BJ (cell line): ENCODE measurements at regions of chr15 and their contacts with region 1.

Region 1: GRCh38 chr15:71431345-71432336 is 316.4 kb downstream of the THSD4 start:
- DNase-seq: no peak
- H3K4me3 ChIP-seq: no peak overlapping the region
- H3K27me3 ChIP-seq: no peaks in the 10 kb centered on the region; the same call in 1 of the 2 replicates
- CTCF ChIP-seq: no peak

Region 2: GRCh38 chr15:71338827-71339542 is 92.7 kb before region 1 on chr15:
- CTCF ChIA-PET with region 1: no interaction called
- POLR2A ChIA-PET with region 1: no interaction called
- DNase-seq: no peak
- H3K4me3 ChIP-seq: no peak overlapping the region
- H3K27me3 ChIP-seq: no peaks in the 10 kb centered on the region
- CTCF ChIP-seq: no peak

Region 3: GRCh38 chr15:71349736-71350526 is 81.7 kb before region 1 on chr15:
- CTCF ChIA-PET with region 1: no interaction called
- POLR2A ChIA-PET with region 1: no interaction called
- DNase-seq: no peak
- H3K4me3 ChIP-seq: no peak overlapping the region
- H3K27me3 ChIP-seq: no peaks in the 10 kb centered on the region
- CTCF ChIP-seq: no peak

Region 4: DNA sequence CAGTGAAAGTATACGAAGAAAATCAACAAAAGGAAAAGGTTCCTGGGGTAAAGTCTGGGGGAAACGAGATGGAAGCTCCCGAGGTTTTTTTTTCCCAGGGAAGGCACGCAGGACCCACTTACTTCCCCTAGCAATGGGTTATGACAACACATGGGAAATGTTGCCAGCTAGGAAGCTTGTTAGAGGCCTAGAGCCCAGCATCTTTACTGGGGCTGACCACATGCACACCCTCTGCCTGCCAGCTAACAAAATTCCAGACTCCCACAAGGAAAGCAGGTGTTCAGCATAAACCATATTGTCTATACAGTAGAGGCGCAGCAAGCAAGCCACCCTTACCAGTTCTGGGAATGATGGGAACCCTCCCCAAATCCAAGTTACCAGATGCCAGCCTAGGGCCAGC is 119.9 kb after region 1 on chr15:
- CTCF ChIA-PET with region 1: no interaction called
- POLR2A ChIA-PET with region 1: interaction called, 13 read pairs
- DNase-seq: no peak
- H3K4me3 ChIP-seq: no peak overlapping the region
- H3K27me3 ChIP-seq: no peaks in the 10 kb centered on the region; the same call in 1 of the 2 replicates
- CTCF ChIP-seq: no peak